CD14-positive monocyte (primary cell): ENCODE measurements at regions of chr10 and their contacts with region 1.

Region 1: DNA sequence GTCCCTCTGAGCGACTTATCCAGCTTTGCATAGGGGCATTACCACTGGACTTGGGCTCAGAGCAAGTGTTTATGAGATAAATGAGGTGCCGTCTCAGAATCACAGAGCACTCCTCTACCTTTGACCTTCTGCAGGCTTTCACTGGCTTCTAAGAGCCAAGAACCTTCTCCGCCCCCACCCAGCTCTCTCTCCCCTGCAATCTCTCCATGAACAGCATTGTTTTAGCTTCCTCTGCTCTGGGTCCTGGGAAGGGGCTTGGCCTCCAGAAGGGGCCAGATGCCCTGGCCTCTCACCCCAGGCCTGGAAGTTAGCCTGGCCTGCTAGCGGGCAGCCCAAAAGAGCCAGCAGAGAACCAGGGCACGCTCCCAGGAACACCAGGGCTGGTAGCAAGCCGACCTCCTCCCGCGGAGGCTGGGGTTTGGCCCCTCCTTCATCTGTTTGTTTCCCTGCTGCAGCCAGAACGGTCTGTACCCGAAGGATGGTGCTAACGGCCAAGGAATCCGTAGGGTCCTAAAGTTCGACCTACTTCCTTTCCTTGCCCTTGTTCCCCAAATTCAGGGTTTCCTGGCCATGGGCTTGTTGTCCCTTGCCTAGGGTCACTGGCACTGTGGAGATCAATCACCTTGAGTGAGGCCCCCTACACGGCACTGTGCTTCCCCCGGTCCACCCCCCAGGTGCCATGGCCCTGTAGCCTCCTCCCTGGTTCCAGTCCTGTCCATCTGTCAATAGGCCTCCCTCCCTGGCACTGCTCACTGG is 18.7 kb upstream of the DDIT4 start:
- DNase-seq: peak; percentile 64 to 70 (median 69)
- H3K4me3 ChIP-seq: peak overlapping the region in 1 of 3 experiments; percentile 69
- H3K4me3 Mint-ChIP-seq: peak overlapping the region; percentile 71 to 84
- H3K27ac ChIP-seq: peak overlapping the region in 1 of 2 donors; percentile 31
- H3K27ac Mint-ChIP-seq: peak overlapping the region in 4 of 7 donors; percentile 43 to 79 (median 78)
- H3K4me1 ChIP-seq: peaks cover 39 to 44% of the 10 kb centered on the region in 2 donors
- H3K4me1 Mint-ChIP-seq: peaks cover 37% of the 10 kb centered on the region
- H3K27me3 ChIP-seq: no peaks in the 10 kb centered on the region
- H3K27me3 Mint-ChIP-seq: peaks cover 1 to 2% (median 2%) of the 10 kb centered on the region in 3 donors
- CTCF ChIP-seq: no peak

Region 2: GRCh38 chr10:72215652-72216549 is 39.1 kb before region 1 on chr10 and contains the starts of genes ANAPC16 and ASCC1:
- intact Hi-C with region 1: loop called in 1 of 2 experiments (anchors 5 kb)
- DNase-seq: peak; percentile 83 to 86 (median 84)
- H3K4me3 ChIP-seq: peak within 1 kb of the TSS; percentile 70 to 97 (median 86)
- H3K4me3 Mint-ChIP-seq: peak within 1 kb of the TSS; percentile 98
- H3K27ac ChIP-seq: peak within 1 kb of the TSS; percentile 93 to 99
- H3K27ac Mint-ChIP-seq: peak within 1 kb of the TSS; percentile 97 to 100 (median 99)
- H3K4me1 ChIP-seq: peaks cover 33 to 41% of the 10 kb centered on the region in 2 donors
- H3K4me1 Mint-ChIP-seq: peaks cover 27% of the 10 kb centered on the region
- H3K27me3 ChIP-seq: no peaks in the 10 kb centered on the region
- H3K27me3 Mint-ChIP-seq: peaks cover 0 to 1% (median 0%) of the 10 kb centered on the region in 3 donors
- CTCF ChIP-seq: no peak
- polyA plus RNA-seq, gene ANAPC16: 65.5 to 167 (median 148) TPM
- polyA plus RNA-seq, gene ASCC1: 8.2 to 20.9 (median 17.9) TPM

Region 3: GRCh38 chr10:72292223-72292691 is 37.3 kb after region 1 on chr10:
- intact Hi-C with region 1: loop called (anchors 5 kb)
- DNase-seq: no peak
- H3K4me3 ChIP-seq: no peak overlapping the region
- H3K4me3 Mint-ChIP-seq: no peak overlapping the region
- H3K27ac ChIP-seq: no peak overlapping the region
- H3K27ac Mint-ChIP-seq: peak overlapping the region in 3 of 7 donors; percentile 31 to 68 (median 41)
- H3K4me1 ChIP-seq: peaks cover 20 to 21% of the 10 kb centered on the region in 2 donors
- H3K4me1 Mint-ChIP-seq: peaks cover 37% of the 10 kb centered on the region
- H3K27me3 ChIP-seq: no peaks in the 10 kb centered on the region
- H3K27me3 Mint-ChIP-seq: peaks cover 0 to 7% (median 3%) of the 10 kb centered on the region in 3 donors
- CTCF ChIP-seq: no peak

Region 4: GRCh38 chr10:72331601-72332422 is 76.8 kb after region 1 on chr10:
- intact Hi-C with region 1: loop called (anchors 5 kb)
- DNase-seq: peak; percentile 90 to 93 (median 93)
- H3K4me3 ChIP-seq: peak overlapping the region in 1 of 3 experiments; percentile 67
- H3K4me3 Mint-ChIP-seq: peak overlapping the region; percentile 43 to 80
- H3K27ac ChIP-seq: peak overlapping the region; percentile 60 to 86
- H3K27ac Mint-ChIP-seq: peak overlapping the region; percentile 89 to 97 (median 95)
- H3K4me1 ChIP-seq: peaks cover 88 to 94% of the 10 kb centered on the region in 2 donors
- H3K4me1 Mint-ChIP-seq: peaks cover 91% of the 10 kb centered on the region
- H3K27me3 ChIP-seq: no peaks in the 10 kb centered on the region
- H3K27me3 Mint-ChIP-seq: peaks cover 0 to 8% (median 3%) of the 10 kb centered on the region in 3 donors
- CTCF ChIP-seq: peak; percentile 65